CD4-positive, alpha-beta memory T cell (primary cell): ENCODE measurements at regions of chr5 and their contacts with region 1.

Region 1: GRCh38 chr5:139517683-139518564 is 35.4 kb upstream of the STING1 start:
- DNase-seq: peak; percentile 79 to 93 (median 86)
- H3K4me3 ChIP-seq: peak overlapping the region; percentile 65 to 84
- H3K4me3 Mint-ChIP-seq: peak overlapping the region; percentile 76 to 96 (median 90)
- H3K27ac ChIP-seq: peak overlapping the region; percentile 78
- H3K27ac Mint-ChIP-seq: peak overlapping the region; percentile 80 to 99 (median 98)
- H3K4me1 ChIP-seq: peaks cover 13% of the 10 kb centered on the region
- H3K4me1 Mint-ChIP-seq: peaks cover 16 to 32% (median 23%) of the 10 kb centered on the region in 4 donors
- H3K27me3 ChIP-seq: no peaks in the 10 kb centered on the region
- H3K27me3 Mint-ChIP-seq: peaks cover 1 to 4% of the 10 kb centered on the region in 2 donors

Region 2: GRCh38 chr5:139422307-139422893 is 95.5 kb before region 1 on chr5:
- CTCF ChIA-PET with region 1: interaction called, 632 read pairs
- POLR2A ChIA-PET with region 1: interaction called, 103 read pairs
- intact Hi-C with region 1: loop called (anchors 1 kb)
- DNase-seq: peak; percentile 76 to 81 (median 79)
- H3K4me3 ChIP-seq: no peak overlapping the region
- H3K4me3 Mint-ChIP-seq: no peak overlapping the region
- H3K27ac ChIP-seq: no peak overlapping the region
- H3K27ac Mint-ChIP-seq: peak overlapping the region in 6 of 7 donors; percentile 14 to 77 (median 50)
- H3K4me1 ChIP-seq: peaks cover 3% of the 10 kb centered on the region
- H3K4me1 Mint-ChIP-seq: peaks cover 5 to 6% (median 6%) of the 10 kb centered on the region in 4 donors
- H3K27me3 ChIP-seq: no peaks in the 10 kb centered on the region
- H3K27me3 Mint-ChIP-seq: no peaks in the 10 kb centered on the region

Region 3: GRCh38 chr5:139458580-139459406 is 59.1 kb before region 1 on chr5:
- CTCF ChIA-PET with region 1: interaction called, 32 read pairs
- POLR2A ChIA-PET with region 1: interaction called, 10 read pairs
- intact Hi-C with region 1: loop called (anchors 1 kb)
- DNase-seq: peak; percentile 83 to 94 (median 86)
- H3K4me3 ChIP-seq: peak overlapping the region in 1 of 2 donors; percentile 20
- H3K4me3 Mint-ChIP-seq: peak overlapping the region in 7 of 8 donors; percentile 64 to 89 (median 76)
- H3K27ac ChIP-seq: peak overlapping the region; percentile 68
- H3K27ac Mint-ChIP-seq: peak overlapping the region; percentile 91 to 98 (median 96)
- H3K4me1 ChIP-seq: peaks cover 60% of the 10 kb centered on the region
- H3K4me1 Mint-ChIP-seq: peaks cover 39 to 68% (median 53%) of the 10 kb centered on the region in 4 donors
- H3K27me3 ChIP-seq: no peaks in the 10 kb centered on the region
- H3K27me3 Mint-ChIP-seq: no peaks in the 10 kb centered on the region

Region 4: GRCh38 chr5:139492700-139493192 is 25.2 kb before region 1 on chr5:
- CTCF ChIA-PET with region 1: interaction called, 35 read pairs
- POLR2A ChIA-PET with region 1: no interaction called
- intact Hi-C with region 1: no loop called
- DNase-seq: no peak
- H3K4me3 ChIP-seq: no peak overlapping the region
- H3K4me3 Mint-ChIP-seq: peak overlapping the region in 2 of 8 donors; percentile 20 to 42
- H3K27ac ChIP-seq: no peak overlapping the region
- H3K27ac Mint-ChIP-seq: peak overlapping the region in 2 of 7 donors; percentile 17 to 26
- H3K4me1 ChIP-seq: peaks cover 15% of the 10 kb centered on the region
- H3K4me1 Mint-ChIP-seq: peaks cover 9 to 29% (median 18%) of the 10 kb centered on the region in 4 donors
- H3K27me3 ChIP-seq: no peaks in the 10 kb centered on the region
- H3K27me3 Mint-ChIP-seq: no peaks in the 10 kb centered on the region

Region 5: GRCh38 chr5:139574641-139575312 is 56.9 kb after region 1 on chr5:
- CTCF ChIA-PET with region 1: interaction called, 18 read pairs
- POLR2A ChIA-PET with region 1: interaction called, 3 read pairs
- intact Hi-C with region 1: no loop called
- DNase-seq: peak in 4 of 5 donors; percentile 37 to 45 (median 40)
- H3K4me3 ChIP-seq: no peak overlapping the region
- H3K4me3 Mint-ChIP-seq: peak overlapping the region in 6 of 8 donors; percentile 5 to 67 (median 44)
- H3K27ac ChIP-seq: peak overlapping the region; percentile 45
- H3K27ac Mint-ChIP-seq: peak overlapping the region; percentile 7 to 84 (median 64)
- H3K4me1 ChIP-seq: peaks cover 75% of the 10 kb centered on the region
- H3K4me1 Mint-ChIP-seq: peaks cover 54 to 78% (median 67%) of the 10 kb centered on the region in 4 donors
- H3K27me3 ChIP-seq: no peaks in the 10 kb centered on the region
- H3K27me3 Mint-ChIP-seq: no peaks in the 10 kb centered on the region

Region 6: DNA sequence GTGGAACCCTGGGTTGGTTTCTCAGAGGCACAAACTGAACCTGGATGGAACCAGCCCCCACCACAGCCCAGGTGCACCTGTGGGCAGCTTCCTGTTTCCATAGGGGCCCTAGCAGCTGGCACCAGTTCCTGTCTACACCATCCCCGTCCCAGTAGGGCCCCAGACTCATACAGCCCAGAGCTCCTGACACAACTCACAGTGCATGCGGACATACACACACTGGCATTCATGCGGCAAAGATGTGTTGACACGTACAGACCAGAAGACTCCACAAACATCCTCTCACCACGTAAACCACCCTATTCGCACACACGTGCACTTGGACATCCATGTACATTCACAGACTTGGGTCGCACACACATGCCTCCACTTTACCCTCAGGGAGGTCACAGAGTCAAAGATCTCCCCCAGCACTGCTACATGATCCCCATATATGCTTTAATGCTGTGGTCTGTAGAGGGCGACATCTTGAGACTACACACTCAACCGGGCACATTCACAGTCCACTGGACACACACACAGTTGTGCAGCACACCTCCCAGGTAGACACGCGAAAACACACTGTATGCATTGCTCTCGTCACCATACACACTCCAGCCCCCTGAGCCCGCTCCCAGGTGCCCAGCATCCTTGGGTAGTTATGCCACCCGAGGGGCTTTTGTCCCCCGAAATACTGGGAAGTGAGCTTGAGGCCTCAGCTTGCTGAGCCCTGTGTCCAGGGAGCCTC is 152.6 kb after region 1 on chr5:
- CTCF ChIA-PET with region 1: no interaction called
- POLR2A ChIA-PET with region 1: no interaction called
- intact Hi-C with region 1: no loop called
- DNase-seq: no peak
- H3K4me3 ChIP-seq: no peak overlapping the region
- H3K4me3 Mint-ChIP-seq: peak overlapping the region in 7 of 8 donors; percentile 10 to 87 (median 49)
- H3K27ac ChIP-seq: no peak overlapping the region
- H3K27ac Mint-ChIP-seq: peak overlapping the region in 6 of 7 donors; percentile 1 to 85 (median 56)
- H3K4me1 ChIP-seq: peaks cover 43% of the 10 kb centered on the region
- H3K4me1 Mint-ChIP-seq: peaks cover 14 to 47% (median 31%) of the 10 kb centered on the region in 4 donors
- H3K27me3 ChIP-seq: no peaks in the 10 kb centered on the region
- H3K27me3 Mint-ChIP-seq: no peaks in the 10 kb centered on the region

Region 7: GRCh38 chr5:139765409-139766217 is 247.7 kb after region 1 on chr5:
- CTCF ChIA-PET with region 1: interaction called, 3 read pairs
- POLR2A ChIA-PET with region 1: no interaction called
- intact Hi-C with region 1: loop called (anchors 1 kb)
- DNase-seq: peak; percentile 78 to 87 (median 84)
- H3K4me3 ChIP-seq: peak overlapping the region; percentile 23 to 56
- H3K4me3 Mint-ChIP-seq: peak overlapping the region; percentile 25 to 72 (median 54)
- H3K27ac ChIP-seq: no peak overlapping the region
- H3K27ac Mint-ChIP-seq: peak overlapping the region in 5 of 7 donors; percentile 31 to 66 (median 52)
- H3K4me1 ChIP-seq: peaks cover 9% of the 10 kb centered on the region
- H3K4me1 Mint-ChIP-seq: peaks cover 5 to 8% (median 7%) of the 10 kb centered on the region in 4 donors
- H3K27me3 ChIP-seq: peaks cover 19% of the 10 kb centered on the region
- H3K27me3 Mint-ChIP-seq: peaks cover 19 to 33% of the 10 kb centered on the region in 2 donors

Region 8: DNA sequence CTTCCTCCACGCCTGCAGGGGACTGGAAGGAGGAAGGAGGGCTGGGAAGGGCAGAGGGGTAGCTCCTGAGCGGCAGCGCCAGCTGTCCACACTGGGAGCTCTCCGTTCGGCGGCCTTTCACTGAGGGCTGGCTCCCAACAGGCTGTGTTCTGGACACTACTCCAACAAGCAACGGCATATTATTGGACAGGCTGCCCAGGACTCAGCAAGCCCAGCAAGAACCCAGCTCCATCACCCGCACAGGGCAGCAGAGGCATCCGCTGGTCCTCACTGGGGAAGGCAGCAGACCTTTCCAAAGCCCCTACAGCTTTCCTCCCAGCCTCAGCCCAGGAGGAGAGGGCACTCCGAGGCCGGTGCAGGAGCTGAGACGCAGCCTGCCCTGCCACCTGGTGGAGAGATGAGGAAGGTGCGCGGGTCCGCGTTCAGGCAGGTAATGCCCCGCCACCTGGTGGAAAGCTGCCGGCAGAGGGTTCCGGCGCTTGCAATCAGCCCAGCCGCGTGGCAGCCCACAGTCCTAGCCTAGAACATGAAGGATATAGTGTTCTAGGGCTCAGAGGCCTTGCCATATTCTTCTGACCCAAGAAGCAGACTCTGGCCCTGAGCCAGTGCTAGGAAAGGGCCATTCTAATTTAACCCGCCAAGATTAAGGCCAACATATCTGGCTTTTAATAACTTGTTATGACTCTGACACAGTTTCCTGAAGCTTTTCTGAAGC is 450.8 kb after region 1 on chr5:
- CTCF ChIA-PET with region 1: no interaction called
- POLR2A ChIA-PET with region 1: no interaction called
- intact Hi-C with region 1: no loop called
- DNase-seq: peak; percentile 77 to 82 (median 79)
- H3K4me3 ChIP-seq: no peak overlapping the region
- H3K4me3 Mint-ChIP-seq: no peak overlapping the region
- H3K27ac ChIP-seq: no peak overlapping the region
- H3K27ac Mint-ChIP-seq: peak overlapping the region in 1 of 7 donors; percentile 47
- H3K4me1 ChIP-seq: no peaks in the 10 kb centered on the region
- H3K4me1 Mint-ChIP-seq: no peaks in the 10 kb centered on the region
- H3K27me3 ChIP-seq: no peaks in the 10 kb centered on the region
- H3K27me3 Mint-ChIP-seq: peaks cover 5 to 11% of the 10 kb centered on the region in 2 donors

Region 9: DNA sequence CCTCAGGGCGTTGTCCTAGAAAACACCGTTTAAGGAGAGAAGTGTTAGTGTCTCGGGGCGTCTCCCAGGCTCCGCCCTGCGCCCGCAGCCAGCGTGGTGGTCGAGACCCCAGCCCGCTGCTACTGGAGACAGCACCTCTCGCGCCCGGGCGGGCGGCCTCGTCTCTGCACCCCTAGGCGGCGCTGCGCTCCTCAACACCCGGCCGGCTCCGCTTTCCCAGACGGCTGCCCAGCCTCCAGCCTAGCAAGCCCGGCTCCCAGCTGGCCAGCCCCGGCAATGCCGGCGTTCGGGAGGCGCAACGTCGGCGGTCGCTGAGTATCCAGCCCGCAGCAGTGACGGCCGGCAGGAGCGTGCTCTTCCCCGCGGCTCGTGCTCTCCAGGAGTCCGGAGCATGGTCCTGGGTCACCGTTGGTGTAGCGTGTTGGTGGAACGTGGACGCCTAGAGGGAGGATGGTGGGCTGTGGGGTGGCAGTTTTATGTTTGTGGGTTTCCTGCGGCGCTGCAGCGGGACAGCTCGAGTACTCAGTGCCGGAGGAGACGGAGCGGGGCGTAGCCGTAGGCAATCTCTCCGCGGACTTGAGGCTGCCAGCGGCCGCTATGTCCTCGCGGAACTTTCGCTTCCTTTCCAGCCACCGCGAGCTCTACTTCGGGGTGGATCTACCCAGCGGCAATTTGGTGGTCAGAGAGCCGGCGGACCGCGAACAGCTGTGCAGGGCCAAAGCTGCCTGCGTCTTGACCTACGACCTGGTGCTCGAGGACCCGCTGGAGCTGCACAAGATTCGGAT is 1408.7 kb after region 1 on chr5:
- CTCF ChIA-PET with region 1: no interaction called
- POLR2A ChIA-PET with region 1: no interaction called
- intact Hi-C with region 1: no loop called
- DNase-seq: peak; percentile 11 to 42 (median 29)
- H3K4me3 ChIP-seq: no peak overlapping the region
- H3K4me3 Mint-ChIP-seq: peak overlapping the region; percentile 64 to 80 (median 76)
- H3K27ac ChIP-seq: no peak overlapping the region
- H3K27ac Mint-ChIP-seq: peak overlapping the region in 2 of 7 donors; percentile 12 to 18
- H3K4me1 ChIP-seq: peaks cover 9% of the 10 kb centered on the region
- H3K4me1 Mint-ChIP-seq: peaks cover 1 to 25% (median 5%) of the 10 kb centered on the region in 4 donors
- H3K27me3 ChIP-seq: peaks cover 11% of the 10 kb centered on the region
- H3K27me3 Mint-ChIP-seq: peaks cover 35 to 36% of the 10 kb centered on the region in 2 donors